Motor neuron (in vitro differentiated cells): ENCODE measurements at regions of chr1 and their contacts with region 1.

Region 1: DNA sequence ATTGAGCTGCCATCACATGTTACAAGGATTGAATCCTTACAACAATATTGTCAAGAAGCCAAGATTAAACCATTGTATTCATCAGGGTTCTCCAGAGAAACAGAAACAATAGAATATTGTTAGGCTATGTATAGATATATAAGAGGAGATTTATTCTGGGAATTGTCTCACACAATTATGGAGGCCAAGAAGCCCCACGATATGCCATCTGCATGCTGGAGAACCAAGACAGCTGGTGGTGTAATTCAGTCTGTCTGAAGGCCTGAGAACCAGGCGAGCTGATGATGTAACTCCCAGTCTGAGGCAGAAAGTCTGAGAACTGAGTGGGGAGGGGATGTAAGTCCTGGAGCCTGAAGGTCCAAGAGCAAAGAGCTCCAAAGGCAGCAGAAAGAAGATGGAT is 14.5 kb upstream of the TTF2 start:
- ATAC-seq: peak in 6 of 8 experiments; percentile 31 to 79 (median 49)
- H3K4me3 ChIP-seq: no peak overlapping the region
- H3K27ac ChIP-seq: no peak overlapping the region
- H3K4me1 ChIP-seq: no peaks in the 10 kb centered on the region

Region 2: DNA sequence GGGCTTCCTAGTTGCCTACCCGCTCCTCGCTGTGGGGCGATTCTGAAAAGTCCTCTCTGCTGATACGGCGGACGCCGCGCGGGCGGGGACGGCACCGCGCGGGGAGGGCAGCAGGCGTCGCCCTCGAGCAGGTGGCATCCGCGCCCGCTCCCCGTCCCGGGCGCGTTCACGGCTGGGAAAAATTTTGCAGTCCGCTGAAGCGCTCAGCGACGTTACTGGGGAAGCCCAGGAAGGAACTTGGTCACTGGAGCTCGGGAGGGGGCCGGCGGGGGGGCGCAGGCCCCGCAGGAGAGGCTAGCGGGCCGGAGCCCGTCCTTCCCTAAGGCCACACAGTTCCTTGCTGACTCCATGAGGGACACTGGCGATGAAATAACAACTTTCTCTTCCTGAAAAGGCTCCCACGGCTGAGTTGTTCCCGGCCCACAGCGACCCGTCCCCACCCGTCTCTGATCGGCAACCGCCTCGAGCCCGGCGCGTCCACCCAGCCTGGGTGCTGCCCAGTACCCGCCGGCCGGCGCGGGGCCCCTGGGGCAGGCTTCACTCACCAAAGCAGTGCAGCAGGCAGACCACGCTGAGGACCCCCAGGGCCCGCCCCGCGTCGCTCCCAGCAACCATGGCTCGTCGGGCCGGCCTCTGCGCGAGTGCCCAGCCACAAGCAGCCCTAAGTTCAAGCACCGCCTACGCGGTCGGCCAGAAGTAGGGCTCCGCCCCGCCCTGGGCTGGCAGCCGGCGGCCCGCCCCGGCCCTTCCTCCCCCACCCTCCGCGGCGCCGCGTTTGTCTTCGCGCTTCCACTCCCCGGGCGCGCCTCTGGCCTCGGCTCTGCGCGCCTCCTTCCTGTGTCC is 475.1 kb before region 1 on chr1 and contains the start of gene CD58:
- in situ Hi-C with region 1: loop called in 6 of 9 experiments (anchors 10 to 25 kb)
- ATAC-seq: peak; percentile 69 to 88 (median 86)
- H3K4me3 ChIP-seq: peak within 1 kb of the TSS; percentile 40 to 56 (median 45)
- H3K27ac ChIP-seq: peak within 1 kb of the TSS; percentile 0 to 45
- H3K4me1 ChIP-seq: peaks cover 7 to 16% of the 10 kb centered on the region in 2 donors
- total RNA-seq, gene CD58: 2.5 to 64.5 (median 12.8) TPM

Region 3: GRCh38 chr1:116737020-116737854 is 308.4 kb before region 1 on chr1:
- in situ Hi-C with region 1: loop called in 8 of 9 experiments (anchors 10 to 25 kb)
- ATAC-seq: peak; percentile 56 to 90 (median 81)
- H3K4me3 ChIP-seq: no peak overlapping the region
- H3K27ac ChIP-seq: no peak overlapping the region
- H3K4me1 ChIP-seq: peaks cover 8 to 9% of the 10 kb centered on the region in 2 donors

Region 4: GRCh38 chr1:116934586-116935207 is 110.9 kb before region 1 on chr1:
- in situ Hi-C with region 1: no loop called
- ATAC-seq: peak in 1 of 8 experiments; percentile 50
- H3K4me3 ChIP-seq: no peak overlapping the region
- H3K27ac ChIP-seq: no peak overlapping the region
- H3K4me1 ChIP-seq: peaks cover 0 to 1% of the 10 kb centered on the region in 2 donors

Region 5: DNA sequence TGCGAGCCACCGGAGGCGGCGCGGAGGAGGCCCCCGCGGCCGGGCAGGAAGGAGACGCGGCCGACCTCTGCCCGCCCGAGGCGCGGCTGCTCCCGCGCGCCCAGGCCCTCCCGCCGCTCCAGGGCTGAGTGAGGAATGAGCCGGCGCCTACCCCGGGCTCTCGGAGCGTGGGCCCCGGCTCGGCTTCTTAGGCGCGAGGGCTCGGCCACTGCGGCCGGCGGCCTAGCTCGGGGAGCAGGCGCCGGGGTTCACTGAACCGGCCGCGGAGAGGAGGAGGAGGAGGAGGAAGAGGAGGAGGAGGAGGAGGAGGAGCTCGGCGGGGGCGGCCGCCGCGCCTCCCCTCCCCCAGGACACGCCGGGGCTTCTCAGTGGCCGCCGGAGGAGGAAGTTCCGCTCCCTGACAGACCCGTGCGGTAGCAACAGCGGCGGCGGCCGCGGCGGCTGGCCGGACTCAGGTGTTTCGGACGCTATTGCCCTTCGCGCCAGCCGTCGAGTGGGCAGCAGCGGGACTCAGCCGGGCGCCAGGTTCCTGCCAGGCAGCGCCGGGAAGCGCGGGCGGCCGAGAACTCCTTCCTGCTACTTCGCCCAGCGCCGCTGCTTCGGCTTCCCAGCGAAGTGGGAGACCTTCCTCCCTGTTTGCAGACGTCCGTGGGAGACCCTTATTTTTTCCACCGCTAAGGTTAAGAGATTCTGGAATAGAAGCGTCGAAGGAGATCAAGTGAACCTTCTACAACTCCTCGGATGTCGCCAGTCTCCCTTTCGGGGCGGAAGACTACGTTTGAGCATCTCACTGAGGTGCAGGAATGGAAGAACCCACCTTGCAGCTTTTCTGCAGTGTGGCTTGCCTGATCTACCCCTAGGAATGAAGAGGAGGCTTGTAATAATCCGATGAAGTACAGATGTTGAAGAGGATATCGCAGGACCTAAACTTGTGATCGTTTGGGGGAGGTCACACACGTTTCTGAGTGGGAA is 321.7 kb after region 1 on chr1 and contains the start of gene MAN1A2:
- in situ Hi-C with region 1: no loop called
- ATAC-seq: peak; percentile 77 to 82 (median 78)
- H3K4me3 ChIP-seq: peak within 1 kb of the TSS; percentile 64 to 90 (median 80)
- H3K27ac ChIP-seq: peak within 1 kb of the TSS; percentile 88 to 93
- H3K4me1 ChIP-seq: peaks cover 13 to 33% of the 10 kb centered on the region in 2 donors
- total RNA-seq, gene MAN1A2: 33.3 to 57.9 (median 41.1) TPM

Region 6: GRCh38 chr1:117605774-117606648 is 560.4 kb after region 1 on chr1 and contains the start of gene TENT5C:
- in situ Hi-C with region 1: no loop called
- ATAC-seq: peak; percentile 84 to 97 (median 94)
- H3K4me3 ChIP-seq: peak within 1 kb of the TSS; percentile 39 to 60 (median 47)
- H3K27ac ChIP-seq: no peak within 1 kb of the TSS
- H3K4me1 ChIP-seq: no peaks in the 10 kb centered on the region
- total RNA-seq, gene TENT5C: 0.05 to 1.4 (median 0.56) TPM